ENCODE measurements at regions of chr11 and their contacts with region 1.

Region 1: GRCh38 chr11:60363542-60364510 is 14.5 kb upstream of the MS4A7 start:
- DNase-seq: peak; percentile 39
- H3K4me3 ChIP-seq: no peak overlapping the region
- H3K27ac ChIP-seq: no peak overlapping the region
- H3K4me1 ChIP-seq: no peaks in the 10 kb centered on the region
- H3K27me3 ChIP-seq: peaks cover 5% of the 10 kb centered on the region
- CTCF ChIP-seq: peak; percentile 69 to 74

Region 2: DNA sequence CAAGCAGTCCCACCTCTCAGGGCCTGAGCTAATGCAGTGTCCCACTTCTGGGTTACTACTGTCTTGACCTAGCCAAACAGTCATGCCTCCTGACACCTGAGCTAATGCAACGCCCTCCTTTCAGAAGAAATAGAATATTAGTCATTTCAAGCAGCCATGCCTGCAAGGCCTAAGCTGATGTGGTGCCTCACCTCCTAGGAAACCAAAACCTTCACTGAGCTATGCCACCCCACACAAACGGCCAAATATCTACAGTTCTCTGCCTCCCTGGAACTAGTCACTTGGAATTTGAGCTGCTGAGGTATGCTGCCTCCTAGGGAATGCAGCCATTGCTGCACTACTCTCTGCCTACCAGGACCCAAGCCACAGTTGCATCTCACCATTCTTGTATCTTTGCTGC is 45.1 kb before region 1 on chr11:
- CTCF ChIA-PET with region 1: no interaction called
- dilution Hi-C with region 1: no loop called
- in situ Hi-C with region 1: no loop called
- intact Hi-C with region 1: no loop called
- DNase-seq: peak; percentile 52
- H3K4me3 ChIP-seq: no peak overlapping the region
- H3K27ac ChIP-seq: no peak overlapping the region
- H3K4me1 ChIP-seq: no peaks in the 10 kb centered on the region
- H3K27me3 ChIP-seq: peaks cover 4% of the 10 kb centered on the region
- CTCF ChIP-seq: peak in 1 of 2 donors; percentile 24

Region 3: GRCh38 chr11:60607483-60607882 is 243.7 kb after region 1 on chr11:
- CTCF ChIA-PET with region 1: no interaction called
- dilution Hi-C with region 1: no loop called
- in situ Hi-C with region 1: loop called (anchors 10 to 25 kb)
- intact Hi-C with region 1: no loop called
- DNase-seq: no peak
- H3K4me3 ChIP-seq: no peak overlapping the region
- H3K27ac ChIP-seq: no peak overlapping the region
- H3K4me1 ChIP-seq: no peaks in the 10 kb centered on the region
- H3K27me3 ChIP-seq: peaks cover 4% of the 10 kb centered on the region
- CTCF ChIP-seq: peak; percentile 3 to 9

Region 4: GRCh38 chr11:60615497-60615896 is 251.7 kb after region 1 on chr11:
- CTCF ChIA-PET with region 1: interaction called, 4 read pairs
- dilution Hi-C with region 1: no loop called
- in situ Hi-C with region 1: loop called (anchors 10 to 25 kb)
- intact Hi-C with region 1: loop called (anchors 1 kb)
- DNase-seq: no peak
- H3K4me3 ChIP-seq: no peak overlapping the region
- H3K27ac ChIP-seq: no peak overlapping the region
- H3K4me1 ChIP-seq: no peaks in the 10 kb centered on the region
- H3K27me3 ChIP-seq: no peaks in the 10 kb centered on the region
- CTCF ChIP-seq: no peak

Region 5: GRCh38 chr11:60634126-60634525 is 270.3 kb after region 1 on chr11:
- CTCF ChIA-PET with region 1: no interaction called
- dilution Hi-C with region 1: no loop called
- in situ Hi-C with region 1: no loop called
- intact Hi-C with region 1: loop called (anchors 5 kb)
- DNase-seq: no peak
- H3K4me3 ChIP-seq: no peak overlapping the region
- H3K27ac ChIP-seq: no peak overlapping the region
- H3K4me1 ChIP-seq: no peaks in the 10 kb centered on the region
- H3K27me3 ChIP-seq: no peaks in the 10 kb centered on the region
- CTCF ChIP-seq: peak; percentile 33 to 37

Region 6: DNA sequence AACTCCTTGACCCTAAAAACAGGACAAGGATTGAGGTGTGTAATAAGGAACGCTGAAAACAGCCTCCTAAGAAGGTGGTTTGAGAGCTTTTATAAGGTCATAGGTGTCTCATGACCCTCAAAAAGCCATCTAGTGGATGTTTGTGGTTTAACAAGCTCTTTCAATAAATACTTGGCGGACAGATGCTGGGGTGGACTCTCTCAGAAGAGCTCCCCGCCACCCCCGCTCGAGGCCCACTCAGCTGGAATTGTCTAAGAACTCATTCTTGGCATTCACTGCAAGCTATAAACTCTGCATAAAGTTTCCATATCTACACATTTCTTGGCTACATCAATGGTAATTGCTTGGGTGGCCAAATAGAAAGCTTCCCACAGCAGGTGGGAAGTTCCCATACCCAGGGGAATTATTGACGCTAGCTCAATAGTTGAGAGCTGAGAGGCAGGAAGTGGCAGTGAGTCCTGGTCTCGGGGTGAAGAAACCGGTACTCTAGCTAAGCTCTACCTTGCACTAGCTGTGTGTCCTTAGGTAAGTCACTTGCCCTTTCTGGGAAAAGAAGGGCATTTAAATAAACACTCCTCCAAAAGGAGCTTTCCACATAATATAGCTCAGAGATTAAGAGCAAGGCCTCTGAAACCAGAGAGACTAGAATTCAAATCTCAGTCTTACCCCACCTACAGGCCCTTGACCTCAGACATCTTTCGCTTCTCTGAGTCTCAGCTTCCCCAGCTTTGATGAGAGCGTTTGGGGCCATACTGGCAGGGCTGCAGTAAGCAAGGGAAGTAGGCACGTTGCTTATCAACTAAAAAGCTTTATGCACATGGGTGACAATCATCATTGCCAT is 399.2 kb after region 1 on chr11:
- CTCF ChIA-PET with region 1: no interaction called
- dilution Hi-C with region 1: no loop called
- in situ Hi-C with region 1: no loop called
- intact Hi-C with region 1: loop called (anchors 10 kb)
- DNase-seq: no peak
- H3K4me3 ChIP-seq: no peak overlapping the region
- H3K27ac ChIP-seq: no peak overlapping the region
- H3K4me1 ChIP-seq: no peaks in the 10 kb centered on the region
- H3K27me3 ChIP-seq: no peaks in the 10 kb centered on the region
- CTCF ChIP-seq: peak; percentile 27 to 53

Measured in mammary epithelial cell (primary cell).